Activated CD4-positive, alpha-beta T cell treated with anti-CD3 and anti-CD28 coated beads, Interleukin-2, amount 10 ng/mL, durations not matched to agents 24 days and 14 days (primary cell): ENCODE measurements at regions of chr1 and their contacts with region 1.

Region 1: GRCh38 chr1:9942939-9943788 is at the starts of genes LZIC and NMNAT1:
- DNase-seq: peak; percentile 98
- H3K4me3 Mint-ChIP-seq: peak within 1 kb of the TSS; percentile 95
- H3K27ac Mint-ChIP-seq: peak within 1 kb of the TSS; percentile 95
- H3K4me1 Mint-ChIP-seq: peaks cover 11% of the 10 kb centered on the region
- H3K27me3 Mint-ChIP-seq: no peaks in the 10 kb centered on the region
- total RNA-seq, gene LZIC: 35.1 and 35.9 TPM in 2 replicates
- total RNA-seq, gene NMNAT1: 5.7 and 6.0 TPM in 2 replicates

Region 2: DNA sequence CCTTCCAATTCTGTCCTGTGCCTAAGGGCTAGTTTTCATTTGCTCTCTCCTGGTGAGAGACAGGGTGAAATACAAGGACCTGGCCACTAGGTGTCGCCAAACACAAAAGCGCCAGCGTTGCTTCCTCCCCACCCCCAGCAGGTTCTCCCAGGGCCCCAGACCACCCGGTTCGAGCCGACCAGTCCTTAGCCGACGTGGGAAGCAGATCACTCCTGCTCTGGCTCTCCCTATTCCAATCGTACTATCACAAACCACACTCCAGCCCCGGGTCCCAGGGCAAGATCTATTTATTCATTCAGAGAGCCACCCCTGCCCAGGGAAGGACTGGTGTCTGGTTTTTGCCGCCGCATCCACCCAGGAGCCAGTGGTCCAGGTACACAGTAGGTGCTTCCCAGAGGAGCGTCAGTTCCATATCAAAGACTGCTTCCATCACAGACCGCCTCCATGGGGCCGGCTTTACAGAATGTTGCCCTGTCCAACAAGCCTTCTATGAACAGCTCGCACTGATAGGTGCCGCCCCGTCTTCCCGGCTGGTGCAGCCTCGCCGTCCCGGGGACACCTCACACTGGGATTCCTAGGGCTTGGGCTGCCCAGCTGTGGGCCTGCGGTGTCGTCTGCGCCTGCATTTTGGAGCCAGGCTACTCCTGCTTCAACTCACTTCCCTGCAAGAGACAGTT is 68.1 kb before region 1 on chr1:
- intact Hi-C with region 1: loop called (anchors 1 kb)
- DNase-seq: peak; percentile 91
- H3K4me3 Mint-ChIP-seq: no peak overlapping the region
- H3K27ac Mint-ChIP-seq: no peak overlapping the region
- H3K4me1 Mint-ChIP-seq: peaks cover 4% of the 10 kb centered on the region
- H3K27me3 Mint-ChIP-seq: no peaks in the 10 kb centered on the region

Region 3: DNA sequence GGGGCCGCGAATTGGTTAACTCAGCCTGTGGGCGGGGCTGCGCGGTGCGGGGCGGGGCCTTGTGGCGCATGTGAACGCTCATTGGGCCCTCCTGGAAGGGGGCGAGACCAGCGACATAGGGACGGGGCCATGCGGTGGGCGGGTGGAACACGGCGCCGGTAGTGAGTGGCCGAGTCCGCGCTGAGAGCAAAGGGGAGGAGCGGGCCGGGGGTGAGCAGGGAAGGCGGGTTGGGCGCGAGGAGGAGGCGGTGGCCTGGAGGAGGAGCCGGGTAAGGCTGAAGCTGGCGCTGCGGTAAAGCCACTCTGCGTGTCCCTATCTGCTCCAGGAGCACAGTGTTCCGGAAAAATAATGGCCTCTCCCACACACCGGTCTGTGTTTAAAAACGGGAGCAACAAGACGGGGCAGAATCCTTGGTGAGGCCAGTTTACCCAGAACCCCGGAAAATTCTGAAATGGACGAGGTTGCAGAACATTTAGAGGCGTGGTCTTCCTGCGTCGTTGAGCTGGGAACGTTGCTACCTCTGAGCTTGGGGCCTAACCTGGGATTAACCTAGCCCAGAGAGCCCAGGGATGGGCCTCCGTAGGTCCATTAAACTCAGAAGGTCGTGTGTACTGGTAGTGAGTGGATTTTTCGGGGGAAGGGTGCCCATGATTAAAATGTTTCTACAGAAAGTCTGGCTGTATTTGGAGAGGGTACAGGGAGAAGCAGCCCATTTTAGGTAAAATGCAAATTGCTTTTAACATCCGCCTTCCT is 32.6 kb before region 1 on chr1:
- intact Hi-C with region 1: loop called (anchors 1 kb)
- DNase-seq: peak; percentile 100
- H3K4me3 Mint-ChIP-seq: peak overlapping the region; percentile 97
- H3K27ac Mint-ChIP-seq: peak overlapping the region; percentile 98
- H3K4me1 Mint-ChIP-seq: peaks cover 29% of the 10 kb centered on the region
- H3K27me3 Mint-ChIP-seq: peaks cover 4% of the 10 kb centered on the region

Region 4: DNA sequence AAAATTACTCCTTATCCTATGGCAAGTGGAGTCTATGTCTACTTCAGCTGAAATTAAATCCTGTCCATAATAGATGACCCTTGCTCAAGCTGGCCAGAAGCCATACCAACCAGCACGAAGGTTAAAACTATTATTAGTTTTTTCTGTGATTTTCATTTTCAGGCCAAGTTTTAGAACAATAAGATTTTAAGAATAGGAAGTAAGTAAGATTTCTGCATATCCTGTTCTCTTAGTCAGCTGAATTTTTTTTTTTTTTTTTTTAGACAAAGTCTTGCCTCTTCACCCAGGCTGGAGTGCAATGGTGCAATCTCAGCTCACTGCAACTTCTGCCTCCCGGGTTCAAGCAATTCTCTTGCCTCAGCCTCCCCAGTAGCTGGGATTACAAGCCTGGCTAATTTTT is 47.8 kb after region 1 on chr1:
- intact Hi-C with region 1: no loop called
- DNase-seq: no peak
- H3K4me3 Mint-ChIP-seq: no peak overlapping the region
- H3K27ac Mint-ChIP-seq: no peak overlapping the region
- H3K4me1 Mint-ChIP-seq: no peaks in the 10 kb centered on the region
- H3K27me3 Mint-ChIP-seq: peaks cover 14% of the 10 kb centered on the region

Region 5: GRCh38 chr1:10152709-10153284 is 209.6 kb after region 1 on chr1:
- intact Hi-C with region 1: loop called (anchors 2 kb)
- DNase-seq: peak; percentile 81
- H3K4me3 Mint-ChIP-seq: no peak overlapping the region
- H3K27ac Mint-ChIP-seq: no peak overlapping the region
- H3K4me1 Mint-ChIP-seq: no peaks in the 10 kb centered on the region
- H3K27me3 Mint-ChIP-seq: no peaks in the 10 kb centered on the region